ENCODE measurements at regions of chr12 and their contacts with region 1.

Region 1: GRCh38 chr12:66688846-66689439 is 10.1 kb upstream of the GRIP1 start:
- DNase-seq: peak in 3 of 4 experiments; percentile 9 to 56 (median 41)
- ATAC-seq: peak; percentile 94
- H3K4me3 ChIP-seq: no peak overlapping the region
- H3K27ac ChIP-seq: no peak overlapping the region
- H3K4me1 ChIP-seq: no peaks in the 10 kb centered on the region
- H3K27me3 ChIP-seq: peaks cover 0 to 1% of the 10 kb centered on the region in 2 experiments; a peak in 1 of 5 replicates
- CTCF ChIP-seq: peak; percentile 64 to 75 (median 69)
- EP300 ChIP-seq: no peak
- POLR2A ChIP-seq: no peak
- RAD21 ChIP-seq: peak; percentile 40 to 63

Region 2: GRCh38 chr12:66352197-66352596 is 336.7 kb before region 1 on chr12:
- CTCF ChIA-PET with region 1: no interaction called
- POLR2A ChIA-PET with region 1: no interaction called
- in situ Hi-C with region 1: no loop called
- intact Hi-C with region 1: loop called (anchors 10 kb)
- DNase-seq: peak in 2 of 4 experiments; percentile 22 to 37
- ATAC-seq: peak; percentile 86
- H3K4me3 ChIP-seq: no peak overlapping the region
- H3K27ac ChIP-seq: no peak overlapping the region
- H3K4me1 ChIP-seq: no peaks in the 10 kb centered on the region
- H3K27me3 ChIP-seq: peaks cover 2 to 7% of the 10 kb centered on the region in 2 experiments; a peak in 2 of 5 replicates
- CTCF ChIP-seq: peak; percentile 31 to 42 (median 33); a peak in 4 of 6 replicates
- EP300 ChIP-seq: no peak
- POLR2A ChIP-seq: no peak
- RAD21 ChIP-seq: peak in 1 of 2 experiments; percentile 38; a peak in 1 of 4 replicates

Region 3: GRCh38 chr12:66860752-66861750 is 172.1 kb after region 1 on chr12:
- CTCF ChIA-PET with region 1: no interaction called
- POLR2A ChIA-PET with region 1: no interaction called
- in situ Hi-C with region 1: no loop called
- intact Hi-C with region 1: loop called (anchors 2 kb)
- DNase-seq: peak; percentile 30 to 57 (median 38)
- ATAC-seq: peak; percentile 51; the same call in 1 of the 3 replicates
- H3K4me3 ChIP-seq: no peak overlapping the region
- H3K27ac ChIP-seq: no peak overlapping the region
- H3K4me1 ChIP-seq: no peaks in the 10 kb centered on the region
- H3K27me3 ChIP-seq: no peaks in the 10 kb centered on the region
- CTCF ChIP-seq: peak; percentile 67 to 83 (median 80)
- EP300 ChIP-seq: no peak
- POLR2A ChIP-seq: no peak
- RAD21 ChIP-seq: peak; percentile 47 to 69

Measured in K562 (cell line).